CD4-positive, alpha-beta T cell (primary cell): ENCODE measurements at regions of chr13 and their contacts with region 1.

Region 1: GRCh38 chr13:77480066-77480465 is 55.4 kb upstream of the SCEL start:
- DNase-seq: no peak
- ATAC-seq: no peak
- H3K4me3 ChIP-seq: no peak overlapping the region
- H3K4me3 Mint-ChIP-seq: no peak overlapping the region
- H3K27ac ChIP-seq: no peak overlapping the region
- H3K27ac Mint-ChIP-seq: no peak overlapping the region
- H3K4me1 ChIP-seq: no peaks in the 10 kb centered on the region
- H3K4me1 Mint-ChIP-seq: peaks cover 12% of the 10 kb centered on the region
- H3K27me3 ChIP-seq: no peaks in the 10 kb centered on the region
- H3K27me3 Mint-ChIP-seq: no peaks in the 10 kb centered on the region
- CTCF ChIP-seq: no peak

Region 2: DNA sequence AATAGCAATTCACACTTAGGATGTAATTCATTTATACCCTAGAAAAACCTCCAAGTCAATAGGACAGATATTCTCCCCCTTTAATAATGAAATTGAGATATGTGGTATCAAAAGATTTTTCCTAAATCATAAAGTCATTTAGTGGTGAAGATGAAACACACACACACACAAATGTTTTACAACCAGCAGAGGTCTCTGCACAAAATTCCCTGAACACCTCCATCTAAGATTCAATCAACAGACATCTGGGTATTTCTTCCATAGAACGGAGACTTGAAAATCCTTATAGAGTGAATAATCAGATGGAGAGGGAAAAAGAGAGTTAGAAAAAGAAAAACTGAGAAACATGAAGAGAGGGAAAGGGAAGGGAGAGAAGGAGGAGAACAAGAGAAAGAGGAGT is 205.9 kb before region 1 on chr13:
- CTCF ChIA-PET with region 1: interaction called, 7 read pairs
- POLR2A ChIA-PET with region 1: interaction called, 6 read pairs
- intact Hi-C with region 1: loop called (anchors 1 to 5 kb)
- DNase-seq: peak in 1 of 14 experiments; percentile 9
- ATAC-seq: no peak
- H3K4me3 ChIP-seq: no peak overlapping the region
- H3K4me3 Mint-ChIP-seq: no peak overlapping the region
- H3K27ac ChIP-seq: no peak overlapping the region
- H3K27ac Mint-ChIP-seq: peak overlapping the region; percentile 19
- H3K4me1 ChIP-seq: no peaks in the 10 kb centered on the region
- H3K4me1 Mint-ChIP-seq: peaks cover 24% of the 10 kb centered on the region
- H3K27me3 ChIP-seq: no peaks in the 10 kb centered on the region
- H3K27me3 Mint-ChIP-seq: no peaks in the 10 kb centered on the region
- CTCF ChIP-seq: peak; percentile 18

Region 3: GRCh38 chr13:77554069-77554468 is 74.0 kb after region 1 on chr13:
- CTCF ChIA-PET with region 1: no interaction called
- POLR2A ChIA-PET with region 1: no interaction called
- intact Hi-C with region 1: no loop called
- DNase-seq: no peak
- ATAC-seq: no peak
- H3K4me3 ChIP-seq: no peak overlapping the region
- H3K4me3 Mint-ChIP-seq: no peak overlapping the region
- H3K27ac ChIP-seq: no peak overlapping the region
- H3K27ac Mint-ChIP-seq: no peak overlapping the region
- H3K4me1 ChIP-seq: peaks cover 7% of the 10 kb centered on the region
- H3K4me1 Mint-ChIP-seq: peaks cover 9% of the 10 kb centered on the region
- H3K27me3 ChIP-seq: no peaks in the 10 kb centered on the region
- H3K27me3 Mint-ChIP-seq: no peaks in the 10 kb centered on the region
- CTCF ChIP-seq: no peak

Region 4: GRCh38 chr13:77574096-77574495 is 94.0 kb after region 1 on chr13:
- CTCF ChIA-PET with region 1: no interaction called
- POLR2A ChIA-PET with region 1: no interaction called
- intact Hi-C with region 1: no loop called
- DNase-seq: no peak
- ATAC-seq: no peak
- H3K4me3 ChIP-seq: no peak overlapping the region
- H3K4me3 Mint-ChIP-seq: no peak overlapping the region
- H3K27ac ChIP-seq: no peak overlapping the region
- H3K27ac Mint-ChIP-seq: no peak overlapping the region
- H3K4me1 ChIP-seq: no peaks in the 10 kb centered on the region
- H3K4me1 Mint-ChIP-seq: no peaks in the 10 kb centered on the region
- H3K27me3 ChIP-seq: peaks cover 0 to 19% of the 10 kb centered on the region in 2 experiments
- H3K27me3 Mint-ChIP-seq: peaks cover 57% of the 10 kb centered on the region
- CTCF ChIP-seq: no peak

Region 5: GRCh38 chr13:77637588-77637987 is 157.5 kb after region 1 on chr13:
- CTCF ChIA-PET with region 1: no interaction called
- POLR2A ChIA-PET with region 1: no interaction called
- intact Hi-C with region 1: no loop called
- DNase-seq: no peak
- ATAC-seq: no peak
- H3K4me3 ChIP-seq: no peak overlapping the region
- H3K4me3 Mint-ChIP-seq: no peak overlapping the region
- H3K27ac ChIP-seq: no peak overlapping the region
- H3K27ac Mint-ChIP-seq: no peak overlapping the region
- H3K4me1 ChIP-seq: no peaks in the 10 kb centered on the region
- H3K4me1 Mint-ChIP-seq: no peaks in the 10 kb centered on the region
- H3K27me3 ChIP-seq: no peaks in the 10 kb centered on the region
- H3K27me3 Mint-ChIP-seq: peaks cover 5% of the 10 kb centered on the region
- CTCF ChIP-seq: no peak

Region 6: DNA sequence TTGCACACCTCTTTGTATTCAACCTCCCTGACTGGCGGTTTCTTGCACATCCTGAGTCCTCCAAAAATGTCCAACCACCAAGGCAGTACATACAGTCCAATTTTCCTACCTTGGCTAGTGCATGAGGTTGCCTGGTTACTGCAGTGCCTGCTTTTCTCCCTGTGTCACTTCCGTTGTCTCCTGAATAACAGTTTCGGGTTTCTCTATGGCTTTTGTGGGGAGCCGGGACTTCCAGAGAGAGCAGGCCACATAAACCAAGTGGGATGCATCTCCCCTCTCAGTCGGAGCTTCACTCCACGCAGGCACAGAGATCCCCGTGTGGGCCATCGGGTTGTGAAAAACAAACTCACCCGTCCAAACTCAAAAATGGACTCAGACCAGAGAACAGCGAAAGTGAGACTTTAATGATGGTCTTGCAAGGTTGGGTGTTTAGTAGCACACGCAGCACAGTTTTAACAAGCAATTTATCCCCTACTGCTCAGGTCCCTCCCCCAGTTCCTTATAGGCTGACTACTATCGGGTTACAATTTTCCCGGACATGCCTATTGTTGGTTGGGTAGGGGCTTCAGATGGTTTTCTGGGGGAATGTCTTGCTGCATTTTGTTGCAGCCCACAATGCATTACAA is 950.2 kb after region 1 on chr13:
- CTCF ChIA-PET with region 1: no interaction called
- POLR2A ChIA-PET with region 1: no interaction called
- intact Hi-C with region 1: no loop called
- DNase-seq: no peak
- ATAC-seq: no peak
- H3K4me3 ChIP-seq: no peak overlapping the region
- H3K4me3 Mint-ChIP-seq: no peak overlapping the region
- H3K27ac ChIP-seq: no peak overlapping the region
- H3K27ac Mint-ChIP-seq: no peak overlapping the region
- H3K4me1 ChIP-seq: no peaks in the 10 kb centered on the region
- H3K4me1 Mint-ChIP-seq: no peaks in the 10 kb centered on the region
- H3K27me3 ChIP-seq: no peaks in the 10 kb centered on the region
- H3K27me3 Mint-ChIP-seq: peaks cover 23% of the 10 kb centered on the region
- CTCF ChIP-seq: no peak